Psoas muscle (tissue), 8 donors: ENCODE measurements at regions of chr21 and their contacts with region 1.

Region 1: DNA sequence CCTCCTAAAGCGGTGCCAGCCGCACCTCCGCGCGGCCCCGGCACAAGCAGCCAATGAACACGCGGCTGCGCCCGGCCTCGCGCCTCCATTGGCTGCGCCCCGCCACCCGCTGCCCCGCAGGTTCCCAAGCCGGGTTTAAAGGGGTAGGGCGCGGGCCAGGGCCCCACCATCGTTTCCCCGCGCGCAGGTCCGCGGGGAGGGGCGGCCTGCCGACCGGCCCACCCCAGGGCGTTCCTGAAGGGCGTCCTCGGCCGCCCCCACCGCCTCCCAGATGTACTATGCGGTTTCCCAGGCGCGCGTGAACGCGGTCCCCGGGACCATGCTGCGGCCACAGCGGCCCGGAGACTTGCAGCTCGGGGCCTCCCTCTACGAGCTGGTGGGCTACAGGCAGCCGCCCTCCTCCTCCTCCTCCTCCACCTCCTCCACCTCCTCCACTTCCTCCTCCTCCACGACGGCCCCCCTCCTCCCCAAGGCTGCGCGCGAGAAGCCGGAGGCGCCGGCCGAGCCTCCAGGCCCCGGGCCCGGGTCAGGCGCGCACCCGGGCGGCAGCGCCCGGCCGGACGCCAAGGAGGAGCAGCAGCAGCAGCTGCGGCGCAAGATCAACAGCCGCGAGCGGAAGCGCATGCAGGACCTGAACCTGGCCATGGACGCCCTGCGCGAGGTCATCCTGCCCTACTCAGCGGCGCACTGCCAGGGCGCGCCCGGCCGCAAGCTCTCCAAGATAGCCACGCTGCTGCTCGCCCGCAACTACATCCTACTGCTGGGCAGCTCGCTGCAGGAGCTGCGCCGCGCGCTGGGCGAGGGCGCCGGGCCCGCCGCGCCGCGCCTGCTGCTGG is at the start of gene OLIG1:
- DNase-seq: peak; percentile 33 to 67
- ATAC-seq: peak; percentile 89 to 97 (median 92)
- H3K4me3 ChIP-seq: peak within 1 kb of the TSS; percentile 68
- H3K27ac ChIP-seq: no peak within 1 kb of the TSS
- H3K4me1 ChIP-seq: peaks cover 14% of the 10 kb centered on the region
- H3K27me3 ChIP-seq: peaks cover 0 to 79% (median 12%) of the 10 kb centered on the region in 3 donors
- CTCF ChIP-seq: no peak
- total RNA-seq, gene OLIG1: 0.10 to 3.4 (median 0.44) TPM in 3 of 4 donors, not detected in the other

Region 2: GRCh38 chr21:32844653-32845436 is 225.3 kb before region 1 on chr21:
- intact Hi-C with region 1: no loop called
- DNase-seq: no peak
- ATAC-seq: peak in 3 of 4 donors; percentile 19 to 50 (median 40)
- H3K4me3 ChIP-seq: no peak overlapping the region
- H3K27ac ChIP-seq: no peak overlapping the region
- H3K4me1 ChIP-seq: no peaks in the 10 kb centered on the region
- H3K27me3 ChIP-seq: peaks cover 2 to 22% (median 4%) of the 10 kb centered on the region in 3 donors
- CTCF ChIP-seq: no peak

Region 3: DNA sequence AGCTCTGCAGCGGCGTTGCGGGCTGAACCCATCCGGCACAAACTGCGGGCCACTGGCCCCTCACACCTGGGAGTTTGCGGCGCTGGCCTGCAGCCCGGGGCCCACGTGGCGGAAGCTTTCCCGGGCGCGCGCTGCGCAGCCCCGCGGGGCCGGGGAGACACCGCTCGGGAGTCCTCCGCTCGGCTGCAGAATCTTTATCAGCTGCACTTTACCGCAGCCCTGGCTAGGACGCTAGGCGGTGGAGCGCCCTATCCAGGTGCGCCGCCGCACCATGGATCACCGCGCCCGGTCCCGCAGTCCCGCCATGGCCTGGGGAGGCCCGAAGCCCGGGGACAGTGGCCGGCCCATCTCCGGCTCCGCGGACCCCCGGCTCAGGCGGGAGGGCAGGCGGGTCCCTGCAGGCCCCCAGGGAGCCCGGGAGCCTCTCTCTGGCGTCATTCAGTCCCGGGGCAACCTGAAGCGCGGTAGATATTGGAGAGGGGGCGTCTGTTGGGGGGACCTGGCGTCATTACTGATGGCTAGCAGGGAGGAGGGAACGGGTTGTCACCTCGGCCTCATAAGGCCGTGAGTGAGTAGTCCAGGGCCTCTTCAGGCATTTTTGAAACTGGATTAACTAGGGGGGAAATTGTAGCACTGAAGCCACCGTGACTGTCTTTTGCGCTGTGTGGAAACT is 50.2 kb before region 1 on chr21:
- intact Hi-C with region 1: loop called in 1 of 2 experiments (anchors 5 kb)
- DNase-seq: no peak
- ATAC-seq: peak in 1 of 4 donors; percentile 32
- H3K4me3 ChIP-seq: peak overlapping the region; percentile 38
- H3K27ac ChIP-seq: no peak overlapping the region
- H3K4me1 ChIP-seq: peaks cover 24% of the 10 kb centered on the region
- H3K27me3 ChIP-seq: peaks cover 0 to 89% (median 40%) of the 10 kb centered on the region in 3 donors
- CTCF ChIP-seq: no peak